A673 (cell line): ENCODE measurements at regions of chr12 and their contacts with region 1.

Region 1: DNA sequence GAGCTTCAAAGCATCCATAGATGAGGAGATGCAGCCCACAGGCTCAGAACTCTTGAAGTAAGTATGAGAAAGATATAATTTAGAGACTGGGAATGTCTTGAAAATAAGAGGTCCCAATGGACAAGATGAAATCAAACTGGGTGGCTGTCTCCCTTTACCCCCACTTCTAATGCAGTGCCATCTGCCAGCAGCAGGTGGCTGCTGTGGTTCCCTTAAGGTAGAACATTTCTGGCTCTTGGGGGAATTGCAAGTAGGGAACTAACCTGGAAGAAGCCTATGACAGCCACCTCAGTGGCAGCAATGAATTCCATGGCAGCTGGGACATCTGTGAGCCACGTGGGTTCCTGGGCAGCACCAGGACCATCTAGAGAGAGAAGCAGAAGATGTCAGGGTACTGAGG is 648 bp downstream of the ERP27 start:
- DNase-seq: no peak
- H3K4me3 ChIP-seq: no peak overlapping the region
- H3K27ac ChIP-seq: no peak overlapping the region
- H3K4me1 ChIP-seq: no peaks in the 10 kb centered on the region
- H3K27me3 ChIP-seq: no peaks in the 10 kb centered on the region
- CTCF ChIP-seq: peak; percentile 28; the same call in 1 of the 2 replicates

Region 2: GRCh38 chr12:14961466-14962152 is 23.9 kb after region 1 on chr12 and contains the start of gene ARHGDIB:
- CTCF ChIA-PET with region 1: no interaction called
- POLR2A ChIA-PET with region 1: interaction called, 12 read pairs
- intact Hi-C with region 1: no loop called
- DNase-seq: peak; percentile 86
- H3K4me3 ChIP-seq: peak within 1 kb of the TSS; percentile 43
- H3K27ac ChIP-seq: peak within 1 kb of the TSS; percentile 78
- H3K4me1 ChIP-seq: peaks cover 49% of the 10 kb centered on the region
- H3K27me3 ChIP-seq: no peaks in the 10 kb centered on the region
- CTCF ChIP-seq: no peak
- total RNA-seq, gene ARHGDIB: 88.1 and 122 TPM in 2 replicates